MCF 10A (cell line): ENCODE measurements at regions of chr22 and their contacts with region 1.

Region 1: DNA sequence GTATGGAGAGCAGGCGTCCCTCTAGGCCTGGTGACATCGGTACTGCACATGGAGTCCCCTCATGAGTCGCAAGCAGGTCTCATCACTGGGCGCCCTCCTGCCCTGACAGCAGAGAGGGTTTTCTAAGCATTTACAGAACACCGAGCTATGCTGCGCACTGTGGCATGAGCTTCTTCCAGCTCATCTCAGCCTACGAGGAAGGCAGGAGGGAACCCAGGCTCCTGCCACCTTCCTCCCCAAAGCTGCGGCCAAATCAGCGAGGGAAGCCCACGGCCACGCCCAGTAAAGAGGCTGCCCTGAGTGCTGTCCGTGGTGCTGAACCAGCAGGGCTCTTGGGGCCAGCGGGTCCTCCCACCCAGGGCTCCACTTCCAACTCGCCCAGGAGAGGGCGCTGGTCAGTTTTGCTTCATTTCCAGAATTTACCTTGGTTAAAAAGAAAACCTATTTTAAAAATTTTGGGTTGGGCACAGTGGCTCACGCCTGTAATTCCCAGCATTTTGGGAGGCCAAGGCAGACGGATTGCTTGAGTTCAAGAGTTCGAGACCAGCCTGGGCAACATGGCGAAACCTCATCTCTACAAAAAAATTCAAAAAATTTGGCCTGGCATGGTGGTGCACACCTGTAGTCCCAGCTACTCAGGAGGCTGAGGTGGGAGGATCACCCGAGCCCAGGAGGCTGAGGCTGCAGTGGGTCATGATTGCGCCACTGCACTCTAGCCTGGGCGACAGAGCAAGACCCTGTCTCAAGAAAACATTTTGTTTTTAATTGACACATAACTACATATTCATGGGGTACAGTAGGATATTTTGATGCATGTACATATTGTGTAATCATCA is 34.2 kb downstream of the PHF21B start:
- DNase-seq: peak; percentile 91
- H3K4me3 Mint-ChIP-seq: no peak overlapping the region
- H3K27ac Mint-ChIP-seq: no peak overlapping the region
- H3K4me1 Mint-ChIP-seq: no peaks in the 10 kb centered on the region
- H3K27me3 Mint-ChIP-seq: peaks cover 51% of the 10 kb centered on the region
- CTCF ChIP-seq: peak; percentile 89

Region 2: DNA sequence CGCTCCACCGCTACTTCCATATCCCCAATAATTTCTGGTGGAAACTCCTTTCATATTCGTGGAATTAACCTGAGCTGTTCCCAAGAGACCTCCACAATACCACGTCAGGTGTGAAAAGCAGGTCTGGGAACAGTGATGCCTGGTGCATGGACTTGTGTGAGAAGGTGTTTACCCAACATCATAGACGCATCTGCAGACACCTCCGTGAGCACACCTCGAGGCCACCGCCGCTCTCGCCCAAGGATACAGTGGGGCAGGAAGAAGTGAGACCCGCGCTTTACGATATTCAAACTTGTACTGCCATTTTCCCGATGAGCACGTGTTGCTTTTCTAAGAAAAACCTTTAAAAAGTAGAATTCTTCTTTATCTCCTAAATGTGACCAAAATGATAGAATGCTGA is 26.0 kb after region 1 on chr22:
- CTCF ChIA-PET with region 1: no interaction called
- POLR2A ChIA-PET with region 1: no interaction called
- intact Hi-C with region 1: no loop called
- DNase-seq: no peak
- H3K4me3 Mint-ChIP-seq: no peak overlapping the region
- H3K27ac Mint-ChIP-seq: no peak overlapping the region
- H3K4me1 Mint-ChIP-seq: no peaks in the 10 kb centered on the region
- H3K27me3 Mint-ChIP-seq: peaks cover 46% of the 10 kb centered on the region
- CTCF ChIP-seq: no peak

Region 3: GRCh38 chr22:45051419-45051818 is 75.8 kb after region 1 on chr22:
- CTCF ChIA-PET with region 1: no interaction called
- POLR2A ChIA-PET with region 1: no interaction called
- intact Hi-C with region 1: no loop called
- DNase-seq: no peak
- H3K4me3 Mint-ChIP-seq: no peak overlapping the region
- H3K27ac Mint-ChIP-seq: no peak overlapping the region
- H3K4me1 Mint-ChIP-seq: no peaks in the 10 kb centered on the region
- H3K27me3 Mint-ChIP-seq: peaks cover 87% of the 10 kb centered on the region
- CTCF ChIP-seq: no peak

Region 4: DNA sequence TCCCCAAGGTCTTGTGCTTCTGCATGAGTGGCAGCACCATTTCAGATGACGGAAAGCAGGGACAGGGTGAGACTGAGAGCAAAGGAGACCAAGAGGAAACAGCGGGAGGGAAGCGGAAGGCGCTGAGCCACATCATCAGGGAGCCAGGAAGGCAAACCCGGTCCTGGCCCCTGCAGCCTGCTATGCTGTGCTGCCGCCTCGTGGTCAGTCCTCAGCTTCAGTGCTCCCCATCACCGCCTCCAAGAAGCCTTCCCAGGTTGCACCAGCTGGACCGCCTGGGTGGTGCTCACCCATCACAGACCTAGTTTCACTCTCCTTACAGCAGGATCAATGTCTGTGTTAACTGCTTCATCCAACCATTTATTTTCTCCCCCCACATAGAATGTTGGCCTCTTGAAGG is 107.2 kb after region 1 on chr22:
- CTCF ChIA-PET with region 1: interaction called, 4 read pairs
- POLR2A ChIA-PET with region 1: no interaction called
- intact Hi-C with region 1: loop called (anchors 1 kb)
- DNase-seq: peak; percentile 16
- H3K4me3 Mint-ChIP-seq: no peak overlapping the region
- H3K27ac Mint-ChIP-seq: no peak overlapping the region
- H3K4me1 Mint-ChIP-seq: no peaks in the 10 kb centered on the region
- H3K27me3 Mint-ChIP-seq: peaks cover 42% of the 10 kb centered on the region
- CTCF ChIP-seq: peak; percentile 40

Region 5: GRCh38 chr22:45268958-45269844 is 293.6 kb after region 1 on chr22:
- CTCF ChIA-PET with region 1: no interaction called
- POLR2A ChIA-PET with region 1: no interaction called
- intact Hi-C with region 1: loop called (anchors 10 kb)
- DNase-seq: peak; percentile 67
- H3K4me3 Mint-ChIP-seq: peak overlapping the region; percentile 74
- H3K27ac Mint-ChIP-seq: no peak overlapping the region
- H3K4me1 Mint-ChIP-seq: no peaks in the 10 kb centered on the region
- H3K27me3 Mint-ChIP-seq: no peaks in the 10 kb centered on the region
- CTCF ChIP-seq: peak; percentile 98